ENCODE measurements at regions of chr12 and their contacts with region 1.

Region 1: DNA sequence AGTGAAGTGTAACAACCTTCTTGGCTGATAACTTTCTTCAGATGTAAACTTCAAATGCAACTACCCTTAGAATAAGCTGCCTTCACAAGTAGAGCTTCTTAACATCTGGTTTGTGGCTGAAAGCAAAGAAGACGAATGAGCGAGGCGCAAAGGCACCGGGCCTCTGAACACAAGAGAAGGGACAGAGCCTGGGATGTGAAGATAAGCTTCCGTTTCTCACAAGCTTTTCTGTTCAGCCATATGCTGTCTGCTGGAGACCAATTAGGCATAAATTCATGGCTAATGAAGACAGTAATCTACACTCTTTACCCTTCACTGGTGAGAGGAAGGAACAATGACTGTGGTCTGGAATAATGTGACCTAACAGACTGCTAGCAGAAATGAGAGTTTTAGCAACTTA is 195.2 kb downstream of the ATXN7L3B start:
- DNase-seq: no peak
- H3K4me3 ChIP-seq: no peak overlapping the region
- CTCF ChIP-seq: no peak
- POLR2A ChIP-seq: no peak

Region 2: GRCh38 chr12:73950507-73950906 is 782.3 kb before region 1 on chr12:
- intact Hi-C with region 1: loop called (anchors 5 kb)
- DNase-seq: no peak
- H3K4me3 ChIP-seq: no peak overlapping the region
- CTCF ChIP-seq: no peak
- POLR2A ChIP-seq: no peak

Region 3: DNA sequence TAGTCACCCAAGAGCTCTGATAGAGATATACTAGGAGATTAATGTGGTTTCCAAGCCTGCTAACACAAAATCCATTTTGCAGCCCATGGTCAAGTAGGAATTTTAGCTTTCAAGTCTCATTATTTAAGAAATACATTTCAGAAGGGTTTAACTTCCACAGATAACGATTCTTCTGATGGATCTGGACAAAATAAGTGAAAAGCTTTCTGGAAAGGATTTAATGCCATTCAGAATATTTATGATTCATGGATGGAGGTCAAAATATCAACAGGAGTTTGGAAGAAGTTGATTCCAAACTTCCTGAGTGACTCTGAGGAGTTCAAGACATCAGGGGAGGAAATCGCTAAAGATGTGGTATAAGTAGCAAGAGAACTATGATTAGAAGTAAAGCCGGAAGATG is 19.4 kb after region 1 on chr12:
- intact Hi-C with region 1: no loop called
- DNase-seq: no peak
- H3K4me3 ChIP-seq: no peak overlapping the region
- CTCF ChIP-seq: no peak
- POLR2A ChIP-seq: no peak

Measured in lower leg skin (tissue), 4 donors.